Gastrocnemius medialis (tissue), 4 donors: ENCODE measurements at regions of chr2 and their contacts with region 1.

Region 1: GRCh38 chr2:163345908-163346573 is 389.8 kb downstream of the FIGN start:
- DNase-seq: no peak
- ATAC-seq: no peak
- H3K4me3 ChIP-seq: no peak overlapping the region
- H3K27ac ChIP-seq: no peak overlapping the region
- H3K4me1 ChIP-seq: peaks cover 5 to 7% of the 10 kb centered on the region in 2 donors
- H3K27me3 ChIP-seq: no peaks in the 10 kb centered on the region
- CTCF ChIP-seq: peak; percentile 42 to 73 (median 65)
- POLR2A ChIP-seq: no peak

Region 2: DNA sequence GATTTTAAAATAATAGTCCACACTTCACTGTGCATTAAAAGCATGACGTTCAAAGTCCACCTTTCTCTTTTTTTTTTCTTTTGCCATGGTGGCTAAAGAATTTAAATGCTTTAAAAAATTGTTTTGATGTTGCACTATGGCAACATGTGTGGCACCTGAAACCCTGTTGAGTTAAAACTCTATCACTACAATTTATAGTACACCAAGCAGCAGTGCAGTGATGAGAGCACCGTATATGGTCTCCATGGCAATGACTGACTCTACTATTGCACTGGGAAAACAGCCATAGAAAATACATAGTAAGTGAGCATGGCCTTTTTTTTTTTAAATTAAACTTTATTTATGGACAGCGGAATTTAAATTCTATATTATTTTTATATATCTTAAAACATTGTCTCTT is 90.9 kb after region 1 on chr2:
- in situ Hi-C with region 1: no loop called
- intact Hi-C with region 1: no loop called
- DNase-seq: no peak
- ATAC-seq: no peak
- H3K4me3 ChIP-seq: no peak overlapping the region
- H3K27ac ChIP-seq: no peak overlapping the region
- H3K4me1 ChIP-seq: no peaks in the 10 kb centered on the region
- H3K27me3 ChIP-seq: no peaks in the 10 kb centered on the region
- CTCF ChIP-seq: no peak
- POLR2A ChIP-seq: no peak

Region 3: DNA sequence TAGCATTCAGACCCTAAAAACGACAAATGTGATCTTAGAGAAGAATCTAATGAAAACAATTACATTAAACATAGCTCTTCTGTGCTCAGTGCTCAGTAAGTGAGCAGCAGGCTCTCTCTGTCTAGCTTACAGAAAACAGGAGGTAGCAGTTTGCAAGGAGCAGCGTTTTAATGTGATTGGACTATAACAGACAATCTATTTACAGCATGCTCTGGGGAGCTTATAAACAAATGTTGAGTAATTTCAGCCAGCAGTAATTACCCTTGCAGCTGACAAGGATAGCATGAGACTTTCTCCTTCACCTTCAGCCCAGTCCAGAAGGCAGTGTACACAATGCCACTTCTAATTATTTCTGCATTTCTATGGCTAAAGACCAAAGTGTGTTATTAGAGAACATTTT is 119.4 kb after region 1 on chr2:
- in situ Hi-C with region 1: no loop called
- intact Hi-C with region 1: loop called (anchors 10 kb)
- DNase-seq: no peak
- ATAC-seq: peak; percentile 87 to 93
- H3K4me3 ChIP-seq: no peak overlapping the region
- H3K27ac ChIP-seq: peak overlapping the region in 3 of 4 donors; percentile 46 to 76 (median 65)
- H3K4me1 ChIP-seq: peaks cover 18 to 31% of the 10 kb centered on the region in 2 donors
- H3K27me3 ChIP-seq: no peaks in the 10 kb centered on the region
- CTCF ChIP-seq: no peak
- POLR2A ChIP-seq: peak in 1 of 2 donors; percentile 40

Region 4: GRCh38 chr2:163734881-163735684 is 389.0 kb after region 1 on chr2:
- in situ Hi-C with region 1: no loop called
- intact Hi-C with region 1: loop called (anchors 5 kb)
- DNase-seq: no peak
- ATAC-seq: no peak
- H3K4me3 ChIP-seq: peak overlapping the region; percentile 70 to 78 (median 77)
- H3K27ac ChIP-seq: peak overlapping the region; percentile 86 to 92 (median 88)
- H3K4me1 ChIP-seq: peaks cover 0 to 3% of the 10 kb centered on the region in 2 donors
- H3K27me3 ChIP-seq: no peaks in the 10 kb centered on the region
- CTCF ChIP-seq: no peak
- POLR2A ChIP-seq: no peak

Region 5: DNA sequence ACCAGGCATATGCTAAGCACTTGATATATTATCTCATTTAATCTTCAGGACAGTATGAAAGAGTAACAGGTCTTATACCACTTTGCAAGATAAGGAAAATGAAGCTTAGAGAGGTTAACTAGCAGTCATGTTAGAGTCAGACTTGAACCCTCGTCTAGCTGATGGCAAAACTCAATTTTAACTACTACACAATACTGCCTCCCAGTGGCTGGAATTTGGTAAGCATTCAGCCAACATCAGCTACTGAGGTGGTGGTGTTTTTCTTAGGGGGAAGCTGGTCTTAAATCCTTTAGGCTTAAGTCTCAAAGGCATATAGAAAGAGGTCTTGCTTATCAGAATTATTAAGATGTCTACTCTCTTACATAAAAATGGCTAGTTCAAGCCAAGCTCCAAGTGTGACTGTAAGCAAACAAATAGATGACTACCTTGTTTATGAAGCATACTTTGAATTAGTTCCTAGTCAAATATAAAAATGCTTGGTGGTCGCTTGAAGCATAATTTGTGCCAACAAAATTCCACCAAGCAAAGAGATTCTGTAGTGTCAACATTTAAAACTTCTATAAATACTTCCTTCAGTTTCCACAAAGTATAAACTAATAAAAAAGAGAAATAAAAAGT is 715.2 kb after region 1 on chr2:
- in situ Hi-C with region 1: loop called in 2 of 4 experiments (anchors 25 kb)
- intact Hi-C with region 1: loop called (anchors 5 kb)
- DNase-seq: no peak
- ATAC-seq: no peak
- H3K4me3 ChIP-seq: no peak overlapping the region
- H3K27ac ChIP-seq: no peak overlapping the region
- H3K4me1 ChIP-seq: no peaks in the 10 kb centered on the region
- H3K27me3 ChIP-seq: no peaks in the 10 kb centered on the region
- CTCF ChIP-seq: peak; percentile 4 to 52 (median 35)
- POLR2A ChIP-seq: no peak

Region 6: DNA sequence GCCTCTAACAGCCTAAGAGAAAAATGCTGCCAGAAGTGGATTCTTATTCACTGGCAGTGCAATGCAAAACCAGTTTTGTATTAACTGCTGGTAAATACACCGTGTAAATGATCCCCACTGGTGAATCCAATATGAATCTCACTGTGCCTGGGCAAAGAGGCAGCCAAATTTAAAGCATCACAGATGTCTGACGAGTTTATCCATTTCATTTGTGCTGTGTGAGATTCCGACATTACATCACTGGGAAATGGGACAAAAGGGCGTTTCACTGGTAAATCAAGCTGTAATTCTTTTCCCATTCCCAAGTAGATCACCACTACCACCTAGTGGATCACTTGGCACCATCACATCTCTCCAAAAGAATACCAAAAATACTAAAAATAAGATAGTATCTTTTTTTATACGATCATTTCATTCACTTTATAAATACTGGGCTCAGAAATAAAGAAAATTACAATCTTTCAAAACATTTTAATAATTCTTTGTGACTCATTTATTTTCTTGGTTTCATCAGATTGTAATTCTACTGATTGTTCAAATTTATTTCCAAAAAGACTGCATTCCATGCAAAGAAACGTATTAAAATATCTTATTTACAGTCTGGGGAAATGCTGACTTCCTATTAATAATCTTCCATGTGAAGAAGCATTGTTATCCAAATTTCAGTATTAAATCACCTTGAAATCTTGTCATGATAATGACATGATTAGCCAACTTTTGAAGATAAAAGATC is 1149.6 kb after region 1 on chr2:
- in situ Hi-C with region 1: loop called in 1 of 4 experiments (anchors 25 kb)
- intact Hi-C with region 1: no loop called
- DNase-seq: no peak
- ATAC-seq: no peak
- H3K4me3 ChIP-seq: no peak overlapping the region
- H3K27ac ChIP-seq: no peak overlapping the region
- H3K4me1 ChIP-seq: no peaks in the 10 kb centered on the region
- H3K27me3 ChIP-seq: no peaks in the 10 kb centered on the region
- CTCF ChIP-seq: peak in 2 of 5 experiments; percentile 15 to 38
- POLR2A ChIP-seq: no peak